Heart left ventricle (tissue), 16 donors: ENCODE measurements at regions of chr13 and their contacts with region 1.

Region 1: GRCh38 chr13:32255724-32256109 is 59.4 kb downstream of the ZAR1L start:
- DNase-seq: no peak
- ATAC-seq: no peak
- H3K4me3 ChIP-seq: peak overlapping the region in 11 of 12 donors; percentile 28 to 55 (median 50)
- H3K27ac ChIP-seq: peak overlapping the region; percentile 79 to 93 (median 88)
- H3K4me1 ChIP-seq: peaks cover 0 to 73% (median 28%) of the 10 kb centered on the region in 12 donors
- H3K27me3 ChIP-seq: no peaks in the 10 kb centered on the region
- CTCF ChIP-seq: no peak
- POLR2A ChIP-seq: no peak

Region 2: GRCh38 chr13:32284927-32285632 is 29.4 kb after region 1 on chr13:
- intact Hi-C with region 1: loop called in 3 of 10 experiments (anchors 1 to 5 kb)
- DNase-seq: peak in 3 of 5 donors; percentile 39 to 70 (median 61)
- ATAC-seq: peak; percentile 33 to 68 (median 57)
- H3K4me3 ChIP-seq: peak overlapping the region in 1 of 12 donors; percentile 17
- H3K27ac ChIP-seq: peak overlapping the region; percentile 39 to 84 (median 74)
- H3K4me1 ChIP-seq: peaks cover 6 to 43% (median 20%) of the 10 kb centered on the region in 12 donors
- H3K27me3 ChIP-seq: no peaks in the 10 kb centered on the region
- CTCF ChIP-seq: no peak
- POLR2A ChIP-seq: no peak

Region 3: GRCh38 chr13:32297206-32297605 is 41.5 kb after region 1 on chr13:
- intact Hi-C with region 1: loop called in 2 of 10 experiments (anchors 5 kb)
- DNase-seq: no peak
- ATAC-seq: no peak
- H3K4me3 ChIP-seq: no peak overlapping the region
- H3K27ac ChIP-seq: no peak overlapping the region
- H3K4me1 ChIP-seq: peaks cover 0 to 11% (median 0%) of the 10 kb centered on the region in 12 donors
- H3K27me3 ChIP-seq: no peaks in the 10 kb centered on the region
- CTCF ChIP-seq: no peak
- POLR2A ChIP-seq: no peak